OCI-LY7 (cell line): ENCODE measurements at regions of chr12 and their contacts with region 1.

Region 1: DNA sequence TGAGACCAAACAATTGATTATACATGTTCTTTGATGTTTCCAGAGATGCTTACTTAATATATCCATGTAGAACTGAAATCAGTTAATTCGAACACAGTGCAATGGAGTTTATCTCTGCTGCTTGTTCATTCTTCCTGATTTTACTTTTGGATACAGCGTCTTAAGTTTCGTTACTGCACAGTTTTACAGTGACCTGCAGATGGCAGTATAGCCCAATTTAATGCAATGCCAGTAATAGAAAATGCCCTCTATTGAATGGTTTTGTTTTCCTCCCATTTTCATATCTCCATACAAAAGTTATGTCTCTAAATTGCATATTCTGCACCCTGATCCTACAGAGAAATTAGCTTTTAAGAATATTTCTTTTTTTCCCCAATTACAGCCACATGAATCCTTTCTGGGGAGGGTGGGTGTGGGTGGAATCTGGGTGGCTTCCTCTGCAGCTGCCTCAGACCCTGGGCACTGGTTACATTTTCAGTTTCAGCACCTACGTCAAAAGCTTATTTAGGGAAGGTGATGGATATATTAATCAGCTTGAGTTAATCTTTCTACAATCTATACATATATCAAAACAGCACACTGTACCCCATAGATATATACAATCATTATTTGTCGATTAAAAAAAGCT is 101.1 kb upstream of the DCD start:
- DNase-seq: peak; percentile 67
- H3K4me3 ChIP-seq: no peak overlapping the region
- H3K27ac ChIP-seq: no peak overlapping the region
- H3K4me1 ChIP-seq: no peaks in the 10 kb centered on the region
- CTCF ChIP-seq: peak; percentile 96

Region 2: DNA sequence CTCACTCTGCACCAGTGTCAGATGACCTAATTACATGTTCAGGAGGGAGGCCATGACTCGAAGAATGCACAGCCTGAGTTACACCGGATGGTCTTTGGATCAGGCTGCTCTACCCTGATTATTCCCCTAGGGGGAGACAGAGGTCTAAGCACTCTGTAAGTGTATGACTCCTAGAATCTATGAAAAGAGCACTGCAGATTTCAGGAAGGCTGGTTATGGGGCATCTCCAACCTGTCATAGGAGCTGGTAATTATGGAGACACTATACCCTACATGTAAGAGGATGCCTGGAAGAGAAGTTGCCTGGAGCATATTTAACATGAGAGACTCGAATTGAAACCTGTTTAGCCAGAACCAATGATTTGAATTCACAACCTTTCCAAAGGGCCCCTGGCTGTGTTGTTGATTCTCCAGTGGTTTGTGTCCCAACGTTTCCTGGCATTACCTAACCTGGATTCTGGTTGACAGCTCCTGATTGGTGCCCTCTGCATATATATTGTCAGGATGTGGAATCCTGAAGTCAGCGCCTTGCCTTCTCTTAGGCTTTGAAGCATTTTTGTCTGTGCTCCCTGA is 104.8 kb after region 1 on chr12 and contains the start of gene MUCL1:
- CTCF ChIA-PET with region 1: interaction called, 4 read pairs
- POLR2A ChIA-PET with region 1: no interaction called
- intact Hi-C with region 1: loop called (anchors 5 kb)
- DNase-seq: peak; percentile 67
- H3K4me3 ChIP-seq: no peak within 1 kb of the TSS
- H3K27ac ChIP-seq: no peak within 1 kb of the TSS
- H3K4me1 ChIP-seq: no peaks in the 10 kb centered on the region
- CTCF ChIP-seq: peak; percentile 93
- total RNA-seq, gene MUCL1: not detected in 2 replicates

Region 3: DNA sequence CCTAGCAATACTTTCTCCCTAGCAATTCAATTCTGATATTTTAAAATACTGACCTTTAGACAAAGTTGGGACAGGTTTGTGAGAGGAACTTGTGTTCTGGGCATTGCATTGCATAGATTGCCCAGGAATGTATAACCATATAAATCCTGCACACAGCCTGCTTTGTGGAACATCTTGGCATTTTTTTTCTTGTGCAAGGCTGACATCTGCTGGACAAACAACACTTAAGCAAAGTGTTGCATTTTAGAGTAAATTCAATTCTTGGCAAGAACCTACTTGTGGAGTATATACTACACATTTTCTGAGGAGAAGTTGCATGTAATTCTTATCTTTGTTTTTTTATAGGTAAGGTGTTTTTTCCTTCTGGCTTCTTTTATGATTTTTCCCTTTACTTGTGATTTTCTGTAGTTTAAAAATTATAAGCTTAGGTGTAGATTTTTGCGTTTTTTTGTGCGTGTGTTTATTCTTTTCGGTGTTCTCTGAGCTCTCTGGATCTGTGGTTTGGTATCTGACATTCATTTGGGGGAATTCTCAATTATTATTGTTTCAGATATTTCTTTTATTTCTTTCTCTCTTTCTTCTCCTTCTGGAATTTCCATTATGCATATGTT is 208.8 kb after region 1 on chr12:
- CTCF ChIA-PET with region 1: no interaction called
- POLR2A ChIA-PET with region 1: no interaction called
- intact Hi-C with region 1: loop called (anchors 1 kb)
- DNase-seq: peak; percentile 67
- H3K4me3 ChIP-seq: no peak overlapping the region
- H3K27ac ChIP-seq: no peak overlapping the region
- H3K4me1 ChIP-seq: peaks cover 22% of the 10 kb centered on the region
- CTCF ChIP-seq: peak; percentile 93

Region 4: GRCh38 chr12:55142669-55143565 is 393.6 kb after region 1 on chr12:
- CTCF ChIA-PET with region 1: interaction called, 3 read pairs
- POLR2A ChIA-PET with region 1: no interaction called
- intact Hi-C with region 1: loop called (anchors 5 kb)
- DNase-seq: peak; percentile 76
- H3K4me3 ChIP-seq: no peak overlapping the region
- H3K27ac ChIP-seq: no peak overlapping the region
- H3K4me1 ChIP-seq: no peaks in the 10 kb centered on the region
- CTCF ChIP-seq: peak; percentile 93